Mucosa of descending colon (tissue), 3 donors: ENCODE measurements at regions of chr4 and their contacts with region 1.

Region 1: DNA sequence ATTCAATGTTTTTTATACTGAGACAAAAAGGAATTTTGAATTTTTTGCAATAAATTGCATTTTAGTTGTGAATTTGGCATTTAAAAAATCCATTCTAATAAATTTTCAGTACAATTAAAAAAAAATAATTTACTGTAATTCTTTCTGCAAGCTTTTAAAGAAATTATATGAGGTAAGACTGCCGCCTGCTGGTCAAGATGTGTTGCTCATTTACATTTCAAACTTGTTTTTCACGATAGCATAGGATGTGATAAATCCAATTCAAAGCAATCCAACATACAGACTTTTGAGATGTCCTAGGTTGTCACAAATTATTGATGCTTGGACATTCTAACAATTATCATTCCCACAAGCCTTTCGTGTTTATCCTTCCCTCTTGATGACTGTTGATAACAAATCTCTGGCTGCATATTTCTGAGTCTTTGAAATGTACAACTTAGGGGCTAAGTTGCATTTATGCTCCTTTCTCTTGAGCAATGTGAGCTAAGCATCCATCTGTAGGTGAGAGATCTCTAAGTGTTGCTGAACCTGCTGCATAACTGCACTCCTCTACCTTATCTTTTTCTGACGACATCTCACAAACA is 21.7 kb upstream of the MFAP3L start:
- DNase-seq: peak in 2 of 3 donors; percentile 37 to 73
- ATAC-seq: no peak
- H3K4me3 ChIP-seq: no peak overlapping the region
- H3K4me1 ChIP-seq: no peaks in the 10 kb centered on the region
- CTCF ChIP-seq: peak; percentile 44

Region 2: GRCh38 chr4:169295822-169296221 is 752.0 kb before region 1 on chr4:
- intact Hi-C with region 1: no loop called
- DNase-seq: no peak
- ATAC-seq: no peak
- H3K4me3 ChIP-seq: no peak overlapping the region
- H3K4me1 ChIP-seq: no peaks in the 10 kb centered on the region
- CTCF ChIP-seq: no peak

Region 3: DNA sequence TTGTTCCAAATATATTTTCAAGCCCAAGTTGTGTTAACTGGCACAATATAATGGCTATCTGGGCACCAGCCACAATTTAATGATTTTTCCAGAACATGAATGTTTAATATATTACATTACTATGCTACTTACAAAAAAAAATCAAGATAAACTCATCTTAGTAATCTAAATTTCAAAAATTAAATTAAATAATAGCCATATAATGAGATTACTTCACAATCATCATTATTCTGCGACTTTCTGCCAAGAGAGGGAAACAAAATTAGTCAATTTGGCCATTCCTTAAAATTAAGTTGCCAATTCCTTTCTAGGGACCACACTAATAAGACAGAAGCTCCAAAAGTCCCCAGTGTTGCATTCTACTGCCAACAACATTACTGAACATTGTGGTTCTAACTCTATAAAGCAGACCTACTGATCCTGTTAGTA is 442.9 kb before region 1 on chr4:
- intact Hi-C with region 1: loop called in 1 of 2 experiments (anchors 5 kb)
- DNase-seq: no peak
- ATAC-seq: no peak
- H3K4me3 ChIP-seq: no peak overlapping the region
- H3K4me1 ChIP-seq: no peaks in the 10 kb centered on the region
- CTCF ChIP-seq: no peak

Region 4: DNA sequence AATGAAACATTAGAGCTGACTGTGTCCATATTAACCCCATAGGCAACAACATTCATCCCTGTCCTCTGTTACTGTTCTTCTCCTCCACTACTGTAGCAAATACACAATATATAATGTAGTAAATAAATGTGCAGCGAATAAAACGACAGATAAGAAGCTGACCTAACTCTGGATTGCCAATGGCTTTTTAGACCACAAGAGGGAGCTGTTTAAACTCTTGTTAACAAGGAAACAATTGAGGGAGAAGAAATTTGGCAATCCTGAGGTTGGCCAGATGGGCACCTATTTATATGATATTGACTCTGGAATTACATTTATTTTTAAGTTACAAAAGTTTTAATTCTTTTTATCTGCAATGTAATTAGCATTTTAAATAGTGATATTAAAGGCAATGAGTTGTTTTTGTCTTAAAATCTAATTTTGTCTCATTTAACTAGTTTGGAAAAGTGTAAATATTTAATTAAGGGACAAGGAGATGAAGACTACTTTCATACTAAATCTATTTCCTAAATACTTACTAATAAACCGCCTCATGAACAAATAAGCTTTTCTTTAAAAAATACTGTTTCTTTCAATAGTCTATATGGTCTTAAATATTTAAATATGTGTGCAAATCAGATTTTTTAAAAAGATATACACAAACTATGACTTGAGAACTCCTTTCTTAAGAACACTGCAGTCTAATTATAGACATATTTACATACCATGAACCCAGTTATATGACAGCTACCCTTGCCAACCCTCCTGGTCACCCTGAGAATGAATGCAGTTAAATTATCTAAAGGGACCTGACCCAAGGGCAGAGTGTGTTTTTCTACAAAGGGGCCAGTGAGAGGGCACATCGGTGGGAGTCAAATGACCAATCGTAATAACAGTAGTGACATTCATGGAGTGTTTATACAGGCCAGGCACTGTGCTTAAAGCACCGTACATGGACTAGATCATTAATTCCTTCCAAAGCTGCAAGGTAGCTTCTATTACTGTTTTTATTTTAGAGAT is 237.2 kb before region 1 on chr4:
- intact Hi-C with region 1: loop called (anchors 5 kb)
- DNase-seq: peak in 1 of 3 donors; percentile 72
- ATAC-seq: peak; percentile 69
- H3K4me3 ChIP-seq: no peak overlapping the region
- H3K4me1 ChIP-seq: no peaks in the 10 kb centered on the region
- CTCF ChIP-seq: peak; percentile 63

Region 5: DNA sequence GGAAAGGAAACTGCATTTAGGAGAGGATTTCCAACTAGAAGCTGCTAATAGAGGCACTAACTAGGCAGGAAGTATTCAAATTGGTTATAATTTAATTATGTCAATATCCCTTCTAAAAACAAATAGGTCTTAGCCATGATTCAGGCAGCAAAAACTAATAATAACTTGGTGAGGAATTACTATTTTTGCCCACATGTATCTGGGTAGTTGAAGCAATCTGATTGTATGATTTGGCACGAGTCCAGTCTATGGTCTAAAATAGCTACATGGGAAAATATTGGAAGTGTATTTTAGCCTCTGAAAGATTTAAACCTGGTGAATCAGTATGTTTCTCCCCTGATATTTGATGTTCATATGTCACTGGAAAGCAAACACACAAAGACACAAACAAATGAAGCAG is 83.9 kb before region 1 on chr4:
- intact Hi-C with region 1: no loop called
- DNase-seq: no peak
- ATAC-seq: no peak
- H3K4me3 ChIP-seq: no peak overlapping the region
- H3K4me1 ChIP-seq: no peaks in the 10 kb centered on the region
- CTCF ChIP-seq: no peak

Region 6: GRCh38 chr4:170122252-170122651 is 74.4 kb after region 1 on chr4:
- intact Hi-C with region 1: no loop called
- DNase-seq: no peak
- ATAC-seq: no peak
- H3K4me3 ChIP-seq: no peak overlapping the region
- H3K4me1 ChIP-seq: no peaks in the 10 kb centered on the region
- CTCF ChIP-seq: no peak

Region 7: DNA sequence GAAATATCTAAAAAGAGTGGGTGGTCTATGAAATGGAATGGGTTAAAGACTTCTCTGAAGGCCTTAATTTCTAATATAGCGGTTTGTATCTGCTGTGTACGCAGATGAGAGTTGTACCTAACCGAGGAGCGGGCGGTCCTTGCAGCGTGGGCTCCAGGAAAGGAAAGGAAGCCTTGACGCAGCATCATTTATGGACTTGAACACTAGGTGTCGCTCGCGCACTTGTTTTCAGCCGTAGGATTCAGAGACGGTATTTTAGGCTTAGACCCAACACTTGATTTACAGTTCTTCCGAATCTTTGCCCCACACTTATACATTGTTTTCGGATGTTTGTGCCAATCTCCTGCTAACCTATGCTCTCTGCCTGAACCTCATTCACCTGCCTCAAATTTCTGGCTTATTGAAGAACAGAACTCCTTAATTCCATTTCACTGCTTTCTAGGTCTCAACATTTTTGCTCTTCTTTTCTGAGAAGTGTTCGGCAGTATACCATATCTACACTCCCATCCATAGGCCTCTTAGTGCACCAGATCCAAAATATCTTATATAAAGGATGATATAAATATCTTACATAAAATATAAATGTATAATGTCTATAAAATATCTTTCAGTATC is 90.8 kb after region 1 on chr4:
- intact Hi-C with region 1: no loop called
- DNase-seq: peak in 2 of 3 donors; percentile 61 to 87
- ATAC-seq: peak; percentile 78
- H3K4me3 ChIP-seq: no peak overlapping the region
- H3K4me1 ChIP-seq: no peaks in the 10 kb centered on the region
- CTCF ChIP-seq: peak; percentile 52